PC-9 (cell line): ENCODE measurements at regions of chr14 and their contacts with region 1.

Region 1: GRCh38 chr14:63624203-63624602 is 17.5 kb downstream of the WDR89 start:
- DNase-seq: no peak
- H3K4me3 ChIP-seq: no peak overlapping the region
- H3K27ac ChIP-seq: no peak overlapping the region
- H3K4me1 ChIP-seq: no peaks in the 10 kb centered on the region
- H3K27me3 ChIP-seq: no peaks in the 10 kb centered on the region
- CTCF ChIP-seq: no peak

Region 2: DNA sequence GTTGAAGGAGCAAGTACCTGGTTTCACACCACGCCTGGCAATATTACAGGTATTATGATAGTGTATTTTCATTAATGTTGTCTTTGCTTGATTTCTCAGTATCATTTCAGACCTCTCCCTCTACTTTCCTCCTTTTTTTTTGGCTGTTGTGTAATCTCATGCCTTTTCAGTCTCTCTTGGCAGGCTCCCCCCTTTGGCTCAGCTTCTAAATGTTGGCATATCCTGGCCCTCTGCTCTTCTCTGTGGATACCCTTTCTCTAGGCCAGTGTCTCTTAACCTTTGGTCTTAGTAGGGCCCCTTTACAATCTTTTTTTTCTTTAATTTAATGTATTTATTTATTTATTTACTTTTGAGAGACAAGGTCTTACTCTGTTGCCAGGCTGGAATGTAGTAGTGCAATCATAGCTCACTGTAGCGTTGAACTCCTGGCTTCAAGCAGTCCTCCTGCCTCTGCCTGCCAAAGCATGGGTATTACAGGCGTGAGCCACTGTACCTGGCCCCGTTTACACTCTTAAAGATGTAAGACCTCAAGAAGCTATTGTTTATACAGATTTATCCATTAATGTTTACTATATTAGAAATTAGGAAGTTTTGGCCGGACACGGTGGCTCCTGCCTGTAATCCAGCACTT is 776.7 kb after region 1 on chr14:
- CTCF ChIA-PET with region 1: interaction called, 19 read pairs
- POLR2A ChIA-PET with region 1: no interaction called
- intact Hi-C with region 1: no loop called
- DNase-seq: no peak
- H3K4me3 ChIP-seq: no peak overlapping the region
- H3K27ac ChIP-seq: no peak overlapping the region
- H3K4me1 ChIP-seq: no peaks in the 10 kb centered on the region
- H3K27me3 ChIP-seq: no peaks in the 10 kb centered on the region
- CTCF ChIP-seq: no peak